Colonic mucosa (tissue), 4 donors: ENCODE measurements at regions of chr17 and their contacts with region 1.

Region 1: GRCh38 chr17:27601069-27601975 is 29.7 kb upstream of the LGALS9 start:
- DNase-seq: peak; percentile 91
- H3K4me3 ChIP-seq: no peak overlapping the region
- H3K27ac ChIP-seq: no peak overlapping the region
- H3K4me1 ChIP-seq: no peaks in the 10 kb centered on the region
- H3K27me3 ChIP-seq: no peaks in the 10 kb centered on the region
- CTCF ChIP-seq: peak; percentile 91

Region 2: DNA sequence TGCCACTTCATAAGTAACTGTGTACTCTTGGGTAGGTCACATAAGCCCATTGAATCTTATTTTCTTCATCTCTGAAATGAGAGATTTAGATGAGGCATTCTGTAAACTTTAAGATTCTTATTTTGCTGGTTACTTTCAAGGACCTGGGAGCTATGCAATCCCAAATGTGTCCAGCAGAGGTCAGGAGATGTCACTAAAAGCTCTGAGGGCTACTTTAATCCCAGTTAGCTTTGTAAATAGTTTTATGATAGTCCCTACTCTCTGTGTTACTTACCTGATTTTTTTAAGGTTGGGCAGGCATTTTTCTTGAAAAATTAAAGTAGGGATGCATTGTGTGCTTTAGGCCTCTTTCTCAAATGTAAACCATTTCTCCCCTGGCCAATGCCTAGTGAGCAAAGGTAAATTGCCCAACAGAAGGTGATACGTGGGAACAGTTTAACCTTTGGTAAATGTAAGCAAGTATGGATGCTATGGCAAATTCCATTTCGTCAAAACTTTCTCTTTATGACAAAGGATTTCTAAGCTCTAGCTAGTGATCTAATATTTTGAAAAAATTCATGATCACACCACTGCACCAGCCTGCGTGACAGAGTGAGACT is 364.5 kb before region 1 on chr17:
- intact Hi-C with region 1: loop called (anchors 2 kb)
- DNase-seq: peak; percentile 88
- H3K4me3 ChIP-seq: no peak overlapping the region
- H3K27ac ChIP-seq: no peak overlapping the region
- H3K4me1 ChIP-seq: no peaks in the 10 kb centered on the region
- H3K27me3 ChIP-seq: no peaks in the 10 kb centered on the region
- CTCF ChIP-seq: peak; percentile 90

Region 3: DNA sequence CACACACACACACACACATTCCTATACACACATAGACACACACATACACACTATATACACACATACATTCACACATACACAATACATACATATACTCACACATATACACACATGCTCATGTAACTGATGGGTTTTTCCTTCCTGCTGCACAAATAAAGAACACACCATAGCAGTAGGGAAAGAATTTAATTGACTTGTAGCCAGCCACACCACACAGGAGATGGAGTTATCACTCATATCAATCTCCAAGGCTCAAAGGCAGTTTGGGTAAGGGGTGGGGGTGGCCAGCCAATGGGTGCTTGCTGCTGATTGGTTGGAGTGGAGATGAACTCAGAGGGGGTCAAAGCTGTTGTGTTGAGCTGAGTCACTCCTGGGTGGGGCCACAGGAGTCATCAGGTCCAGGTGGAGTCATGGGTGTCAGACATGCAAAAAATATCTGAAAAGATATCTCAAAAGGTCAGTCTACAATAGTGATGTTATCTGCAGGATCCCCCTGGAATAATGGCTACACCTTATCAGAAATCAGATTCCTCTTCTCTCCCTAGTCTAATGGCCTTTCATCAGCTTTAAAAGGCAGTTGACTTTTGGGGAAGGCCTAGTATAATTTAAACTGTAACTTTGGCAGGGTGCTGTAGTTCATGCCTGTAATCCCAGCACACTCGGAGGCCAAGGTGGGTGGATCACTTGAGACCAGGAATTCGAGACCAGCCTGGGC is 261.3 kb before region 1 on chr17:
- intact Hi-C with region 1: no loop called
- DNase-seq: no peak
- H3K4me3 ChIP-seq: no peak overlapping the region
- H3K27ac ChIP-seq: no peak overlapping the region
- H3K4me1 ChIP-seq: no peaks in the 10 kb centered on the region
- H3K27me3 ChIP-seq: no peaks in the 10 kb centered on the region
- CTCF ChIP-seq: no peak

Region 4: DNA sequence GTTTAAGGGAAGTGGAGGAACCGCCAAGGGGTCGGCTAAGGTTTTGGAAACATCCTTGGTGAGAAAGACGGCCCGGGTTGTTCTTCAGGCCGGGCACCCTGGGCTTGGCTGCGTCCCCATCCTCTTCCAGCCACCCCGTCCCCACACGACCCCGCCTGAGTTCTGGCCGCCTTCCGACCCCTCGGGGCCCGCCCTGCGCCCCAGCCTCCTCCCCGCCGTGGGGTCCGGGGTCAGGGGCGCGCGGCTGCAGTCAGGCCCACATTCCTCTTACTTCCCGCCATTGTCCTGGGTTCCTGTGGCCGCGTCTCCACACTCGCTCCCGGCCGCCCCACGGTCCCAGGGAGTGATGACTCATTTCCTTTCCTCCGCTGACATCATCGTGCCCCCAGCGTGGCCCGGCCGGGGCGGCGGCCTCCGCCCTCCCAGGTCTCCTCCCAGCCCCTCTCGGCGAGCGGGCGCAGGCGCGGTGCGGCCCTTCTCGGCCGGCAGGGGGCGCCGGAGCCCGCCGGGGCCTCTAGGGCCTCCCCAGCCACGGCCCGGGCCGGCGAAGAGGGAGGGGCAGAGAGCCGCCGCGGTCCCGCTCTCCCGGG is 247.8 kb before region 1 on chr17:
- intact Hi-C with region 1: loop called (anchors 2 kb)
- DNase-seq: peak; percentile 91
- H3K4me3 ChIP-seq: peak overlapping the region; percentile 46
- H3K27ac ChIP-seq: peak overlapping the region; percentile 64
- H3K4me1 ChIP-seq: peaks cover 3% of the 10 kb centered on the region
- H3K27me3 ChIP-seq: no peaks in the 10 kb centered on the region
- CTCF ChIP-seq: peak; percentile 87

Region 5: GRCh38 chr17:27494192-27495091 is 106.9 kb before region 1 on chr17:
- intact Hi-C with region 1: loop called (anchors 5 kb)
- DNase-seq: peak; percentile 93
- H3K4me3 ChIP-seq: no peak overlapping the region
- H3K27ac ChIP-seq: peak overlapping the region; percentile 68
- H3K4me1 ChIP-seq: peaks cover under 1% of the 10 kb centered on the region
- H3K27me3 ChIP-seq: no peaks in the 10 kb centered on the region
- CTCF ChIP-seq: peak; percentile 37

Region 6: GRCh38 chr17:27544350-27545131 is 56.8 kb before region 1 on chr17:
- intact Hi-C with region 1: no loop called
- DNase-seq: no peak
- H3K4me3 ChIP-seq: no peak overlapping the region
- H3K27ac ChIP-seq: no peak overlapping the region
- H3K4me1 ChIP-seq: no peaks in the 10 kb centered on the region
- H3K27me3 ChIP-seq: no peaks in the 10 kb centered on the region
- CTCF ChIP-seq: no peak